GM10248 (cell line): ENCODE measurements at regions of chr4 and their contacts with region 1.

Region 1: DNA sequence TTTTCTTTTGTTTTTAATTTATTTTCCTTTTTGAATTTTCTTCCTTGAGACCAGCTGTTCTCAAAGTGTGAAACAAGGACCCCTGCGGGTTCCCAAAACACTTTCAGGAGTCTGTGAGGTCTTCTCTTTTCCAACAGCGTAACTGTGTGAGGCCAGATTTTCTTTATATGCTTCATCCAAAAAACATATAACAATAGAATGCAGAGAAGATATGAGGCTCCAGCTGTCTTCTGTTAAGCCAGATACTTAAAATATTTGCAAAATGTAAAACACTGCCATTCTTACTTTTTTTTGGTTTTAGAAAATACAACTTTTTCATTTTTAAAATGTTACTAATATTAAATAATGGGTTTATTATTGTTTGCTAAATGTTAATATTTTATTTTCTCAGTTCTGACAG is 27.8 kb downstream of the USP38 start:
- DNase-seq: no peak
- CTCF ChIP-seq: no peak

Region 2: GRCh38 chr4:143224255-143224654 is 11.7 kb after region 1 on chr4:
- CTCF ChIA-PET with region 1: interaction called, 18 read pairs
- POLR2A ChIA-PET with region 1: no interaction called
- DNase-seq: no peak
- CTCF ChIP-seq: no peak